Esophagus squamous epithelium (tissue), 5 donors: ENCODE measurements at regions of chr11 and their contacts with region 1.

Region 1: DNA sequence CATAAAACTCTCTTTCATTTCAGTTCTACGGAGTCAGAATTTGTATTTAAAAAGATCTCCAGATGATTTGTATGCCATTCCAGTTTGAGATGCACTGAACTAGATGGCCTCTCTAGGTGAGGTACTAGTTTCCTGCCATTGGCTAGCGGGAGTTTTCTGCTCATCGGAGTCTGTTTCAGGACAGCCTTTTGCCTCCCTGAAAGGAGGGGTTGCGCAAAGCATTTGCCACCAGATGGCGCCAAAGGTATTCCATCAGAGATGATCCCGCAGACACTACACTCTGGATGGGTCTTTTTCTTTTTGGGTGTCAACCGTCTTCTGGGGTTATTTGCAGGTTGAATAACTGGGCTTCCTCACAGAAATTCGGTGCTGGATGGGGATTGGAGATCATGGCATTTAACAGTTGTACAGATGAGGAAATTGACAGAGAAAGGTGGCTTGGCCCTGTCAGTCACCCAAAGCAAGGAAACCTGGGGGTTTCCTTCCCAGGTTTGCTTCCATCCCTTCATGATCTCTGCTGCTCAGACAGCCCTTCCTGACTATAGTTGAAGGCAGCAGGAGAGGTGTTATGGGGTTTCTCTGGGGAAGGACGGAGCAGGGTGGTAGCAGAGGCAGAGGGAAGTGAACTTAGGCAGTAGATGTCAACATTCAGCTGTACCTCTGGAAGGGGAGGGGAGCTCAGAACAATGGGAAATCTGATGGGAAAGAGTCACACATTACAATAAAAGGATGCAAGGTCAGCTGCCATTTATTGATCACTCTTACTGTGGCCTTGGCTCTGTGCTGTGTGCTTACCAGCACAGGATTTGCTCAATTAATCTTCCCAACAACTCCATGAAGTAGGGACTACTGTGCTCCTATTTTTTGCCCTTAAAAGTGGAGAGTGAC is 81.6 kb downstream of the CCDC81 start:
- DNase-seq: no peak
- H3K4me3 ChIP-seq: no peak overlapping the region
- H3K27ac ChIP-seq: peak overlapping the region in 2 of 4 donors; percentile 38 to 52
- H3K4me1 ChIP-seq: peaks cover 0 to 20% (median 7%) of the 10 kb centered on the region in 3 donors
- H3K27me3 ChIP-seq: no peaks in the 10 kb centered on the region
- CTCF ChIP-seq: peak; percentile 74 to 88 (median 88)
- POLR2A ChIP-seq: no peak

Region 2: DNA sequence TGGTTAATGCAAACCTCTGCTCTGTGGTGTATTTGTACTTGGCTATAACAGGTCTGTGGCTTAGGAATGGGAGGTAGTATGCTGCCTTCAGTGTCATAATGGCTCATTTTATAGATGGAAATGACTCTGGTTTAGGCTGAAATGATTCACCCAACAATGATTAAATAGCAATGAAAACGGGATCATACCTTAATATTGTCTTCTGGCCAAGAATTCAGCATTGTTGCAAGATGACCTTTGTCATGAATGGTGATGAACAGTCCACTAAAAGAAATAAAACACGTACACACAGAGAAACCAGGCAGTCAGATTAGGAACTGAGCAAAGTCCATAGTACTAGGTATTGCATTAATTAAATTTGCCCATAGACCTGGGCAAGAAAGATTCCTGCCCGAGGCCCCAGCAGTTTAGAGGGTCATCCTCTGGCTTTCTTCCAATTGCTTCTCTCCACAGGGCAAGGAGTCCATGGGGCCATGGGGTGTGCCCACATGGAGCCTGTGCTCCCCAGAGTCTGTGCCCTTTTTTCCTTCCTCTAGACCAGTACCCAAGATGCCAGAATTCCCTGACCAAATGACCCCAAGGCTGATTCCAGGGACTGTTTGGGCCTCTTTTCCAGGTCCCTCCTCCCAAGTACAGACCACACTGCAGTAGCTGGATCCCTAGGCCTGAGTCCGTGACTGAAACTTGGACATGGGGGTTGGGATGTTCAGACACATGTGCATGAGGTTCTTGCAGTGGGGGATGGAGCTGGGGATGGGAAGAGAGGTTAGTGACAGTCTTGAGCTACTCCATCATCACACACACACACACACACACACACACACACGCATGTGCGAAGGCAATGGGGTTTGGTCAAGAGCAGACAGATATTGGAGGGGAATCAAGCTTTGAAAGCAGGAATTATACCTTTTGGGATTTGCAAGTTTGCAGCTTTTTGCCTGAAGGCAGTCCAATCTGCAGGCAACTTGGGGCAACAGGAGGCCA is 52.6 kb after region 1 on chr11:
- intact Hi-C with region 1: no loop called
- DNase-seq: no peak
- H3K4me3 ChIP-seq: no peak overlapping the region
- H3K27ac ChIP-seq: no peak overlapping the region
- H3K4me1 ChIP-seq: peaks cover 0 to 6% (median 0%) of the 10 kb centered on the region in 3 donors
- H3K27me3 ChIP-seq: no peaks in the 10 kb centered on the region
- CTCF ChIP-seq: no peak
- POLR2A ChIP-seq: no peak

Region 3: GRCh38 chr11:86610559-86611341 is 154.5 kb after region 1 on chr11:
- intact Hi-C with region 1: loop called (anchors 10 kb)
- DNase-seq: no peak
- H3K4me3 ChIP-seq: no peak overlapping the region
- H3K27ac ChIP-seq: no peak overlapping the region
- H3K4me1 ChIP-seq: peaks cover 3 to 26% (median 12%) of the 10 kb centered on the region in 3 donors
- H3K27me3 ChIP-seq: peaks cover 0 to 3% (median 0%) of the 10 kb centered on the region in 4 donors
- CTCF ChIP-seq: no peak
- POLR2A ChIP-seq: no peak

Region 4: GRCh38 chr11:86818466-86819192 is 362.3 kb after region 1 on chr11:
- intact Hi-C with region 1: loop called (anchors 5 kb)
- DNase-seq: no peak
- H3K4me3 ChIP-seq: no peak overlapping the region
- H3K27ac ChIP-seq: no peak overlapping the region
- H3K4me1 ChIP-seq: peaks cover 0 to 24% (median 2%) of the 10 kb centered on the region in 3 donors
- H3K27me3 ChIP-seq: peaks cover 0 to 6% (median 0%) of the 10 kb centered on the region in 4 donors
- CTCF ChIP-seq: peak; percentile 70 to 87 (median 76)
- POLR2A ChIP-seq: no peak